CD4-positive, alpha-beta memory T cell (primary cell): ENCODE measurements at regions of chrX and their contacts with region 1.

Region 1: DNA sequence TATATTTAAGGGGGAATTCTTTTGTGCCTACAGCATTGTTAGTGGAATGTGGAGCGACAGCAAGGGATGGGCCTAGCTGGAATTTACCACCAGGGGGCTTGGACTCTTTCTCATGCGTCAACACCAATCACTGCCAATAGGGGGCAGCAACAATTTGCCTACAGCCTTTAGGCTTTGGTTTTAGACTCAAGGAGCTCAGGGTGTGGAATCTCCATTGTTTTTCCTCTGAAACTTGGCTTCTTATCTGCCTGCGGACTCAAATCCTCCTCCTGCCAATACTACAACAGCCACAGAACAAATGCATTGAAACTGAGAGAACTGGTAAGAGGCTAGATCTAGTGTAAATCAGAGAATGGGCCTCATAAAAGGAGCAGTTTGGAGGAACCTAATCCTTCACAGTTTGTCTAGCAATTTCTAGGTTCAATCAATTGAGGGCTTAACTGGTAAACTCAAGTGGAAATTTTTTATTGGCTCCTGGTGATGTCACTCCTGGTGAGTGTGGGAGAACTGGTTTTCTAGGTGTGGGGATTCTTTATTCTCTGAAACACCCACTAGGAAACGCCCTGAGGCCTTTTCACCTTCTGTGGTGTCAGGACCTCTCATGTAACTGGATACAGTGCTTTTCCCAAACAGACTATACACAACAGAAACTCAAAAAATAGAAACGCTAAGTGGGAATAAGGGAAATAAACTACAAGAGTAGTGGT is 27.9 kb upstream of the TMSB4X start:
- DNase-seq: peak; percentile 69 to 85 (median 79)
- H3K4me3 ChIP-seq: no peak overlapping the region
- H3K4me3 Mint-ChIP-seq: peak overlapping the region in 7 of 8 donors; percentile 41 to 76 (median 64)
- H3K27ac ChIP-seq: peak overlapping the region; percentile 84
- H3K27ac Mint-ChIP-seq: peak overlapping the region; percentile 91 to 99 (median 97)
- H3K4me1 ChIP-seq: peaks cover 49% of the 10 kb centered on the region
- H3K4me1 Mint-ChIP-seq: peaks cover 37 to 58% (median 50%) of the 10 kb centered on the region in 4 donors
- H3K27me3 ChIP-seq: no peaks in the 10 kb centered on the region
- H3K27me3 Mint-ChIP-seq: no peaks in the 10 kb centered on the region

Region 2: GRCh38 chrX:12974796-12975669 is 28.0 kb after region 1 on chrX and contains the start of gene TMSB4X:
- CTCF ChIA-PET with region 1: interaction called, 108 read pairs
- POLR2A ChIA-PET with region 1: interaction called, 1,441 read pairs
- intact Hi-C with region 1: loop called (anchors 1 kb)
- DNase-seq: peak; percentile 81 to 85 (median 83)
- H3K4me3 ChIP-seq: peak within 1 kb of the TSS; percentile 84 to 85
- H3K4me3 Mint-ChIP-seq: peak within 1 kb of the TSS; percentile 92 to 99 (median 98)
- H3K27ac ChIP-seq: peak within 1 kb of the TSS; percentile 84
- H3K27ac Mint-ChIP-seq: peak within 1 kb of the TSS; percentile 89 to 99 (median 97)
- H3K4me1 ChIP-seq: peaks cover 26% of the 10 kb centered on the region
- H3K4me1 Mint-ChIP-seq: peaks cover 16 to 57% (median 38%) of the 10 kb centered on the region in 4 donors
- H3K27me3 ChIP-seq: no peaks in the 10 kb centered on the region
- H3K27me3 Mint-ChIP-seq: no peaks in the 10 kb centered on the region
- total RNA-seq, gene TMSB4X: 4,851 to 5,116 TPM

Region 3: DNA sequence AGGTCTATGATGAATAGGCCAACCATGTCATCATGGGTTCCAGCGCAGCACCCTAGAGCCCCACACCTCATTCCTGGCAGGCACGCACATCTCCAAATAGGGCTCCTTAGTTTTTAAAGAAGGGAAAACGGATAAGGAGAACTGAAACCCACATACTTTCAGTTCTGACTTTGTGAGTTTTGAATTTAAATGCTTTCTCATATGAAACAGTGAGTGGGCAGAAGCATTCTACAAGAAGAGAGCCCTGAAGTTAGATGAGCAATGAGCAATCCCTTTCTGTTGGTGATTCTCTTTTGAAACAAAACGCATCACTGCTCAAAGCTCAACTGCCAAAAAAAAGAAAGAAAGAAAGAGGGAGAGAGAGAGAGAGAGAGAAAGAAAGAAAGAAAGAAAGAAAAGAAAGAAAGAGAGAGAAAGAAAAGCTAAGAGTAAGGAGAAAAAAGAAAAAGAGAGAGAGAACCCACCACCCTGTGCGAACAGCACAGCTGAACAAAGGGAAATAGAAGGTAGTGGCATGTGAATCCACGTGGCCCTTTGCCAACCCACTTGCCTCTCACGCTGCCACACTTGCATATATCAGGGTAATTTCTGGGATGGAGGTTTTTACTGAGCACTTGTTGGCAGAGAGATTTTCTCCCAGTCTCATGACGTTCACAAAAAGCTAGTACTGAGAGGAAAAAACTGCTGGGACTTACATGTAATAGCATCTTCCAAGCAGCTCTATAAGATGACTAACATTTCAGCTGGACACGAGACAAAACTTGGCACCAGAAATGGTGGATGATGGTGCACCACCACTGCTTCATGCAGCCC is 58.9 kb after region 1 on chrX:
- CTCF ChIA-PET with region 1: interaction called, 10 read pairs
- POLR2A ChIA-PET with region 1: interaction called, 23 read pairs
- intact Hi-C with region 1: loop called (anchors 2 kb)
- DNase-seq: no peak
- H3K4me3 ChIP-seq: no peak overlapping the region
- H3K4me3 Mint-ChIP-seq: peak overlapping the region; percentile 67 to 89 (median 77)
- H3K27ac ChIP-seq: peak overlapping the region; percentile 50
- H3K27ac Mint-ChIP-seq: peak overlapping the region; percentile 92 to 99 (median 96)
- H3K4me1 ChIP-seq: peaks cover 81% of the 10 kb centered on the region
- H3K4me1 Mint-ChIP-seq: peaks cover 43 to 75% (median 62%) of the 10 kb centered on the region in 4 donors
- H3K27me3 ChIP-seq: no peaks in the 10 kb centered on the region
- H3K27me3 Mint-ChIP-seq: no peaks in the 10 kb centered on the region

Region 4: GRCh38 chrX:13051529-13052172 is 104.7 kb after region 1 on chrX:
- CTCF ChIA-PET with region 1: interaction called, 12 read pairs
- POLR2A ChIA-PET with region 1: interaction called, 16 read pairs
- intact Hi-C with region 1: loop called (anchors 1 kb)
- DNase-seq: peak; percentile 61 to 71 (median 70)
- H3K4me3 ChIP-seq: no peak overlapping the region
- H3K4me3 Mint-ChIP-seq: peak overlapping the region in 7 of 8 donors; percentile 10 to 80 (median 52)
- H3K27ac ChIP-seq: peak overlapping the region; percentile 42
- H3K27ac Mint-ChIP-seq: peak overlapping the region; percentile 85 to 97 (median 95)
- H3K4me1 ChIP-seq: peaks cover 88% of the 10 kb centered on the region
- H3K4me1 Mint-ChIP-seq: peaks cover 47 to 87% (median 65%) of the 10 kb centered on the region in 4 donors
- H3K27me3 ChIP-seq: no peaks in the 10 kb centered on the region
- H3K27me3 Mint-ChIP-seq: no peaks in the 10 kb centered on the region

Region 5: DNA sequence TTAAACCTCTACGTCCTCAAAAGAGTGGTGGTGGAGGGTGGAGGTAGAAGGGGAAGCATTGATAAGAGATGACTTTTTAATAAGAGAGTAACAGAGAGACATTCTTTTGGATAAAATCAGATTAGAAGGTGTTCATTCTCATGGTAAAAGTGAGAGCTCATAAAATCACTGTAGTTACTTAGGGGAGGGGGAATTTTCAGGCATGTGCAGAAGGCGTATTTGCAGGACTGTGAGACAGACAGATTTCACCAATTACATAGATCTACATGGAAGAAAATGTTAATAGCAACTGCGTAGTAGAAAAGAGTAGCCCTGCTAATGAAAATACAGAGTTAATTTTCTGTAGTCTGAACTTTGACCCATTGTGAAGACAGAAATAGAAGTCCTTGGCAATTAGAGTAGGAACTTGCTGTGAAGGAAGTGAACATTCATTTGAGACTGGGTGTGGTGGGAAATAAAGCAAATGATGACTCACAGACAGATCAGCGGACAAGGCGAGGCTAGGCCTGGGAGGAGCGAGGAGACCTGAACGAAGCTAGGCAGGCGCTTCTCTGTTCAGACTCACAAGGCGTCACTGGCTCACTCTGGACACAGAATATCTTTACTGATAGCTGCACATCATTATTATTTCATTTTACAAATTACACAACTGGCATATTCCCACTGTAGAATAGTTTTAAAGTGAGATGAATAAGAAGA is 154.6 kb after region 1 on chrX:
- CTCF ChIA-PET with region 1: interaction called, 210 read pairs
- POLR2A ChIA-PET with region 1: interaction called, 3 read pairs
- intact Hi-C with region 1: no loop called
- DNase-seq: peak in 4 of 5 donors; percentile 43 to 72 (median 52)
- H3K4me3 ChIP-seq: no peak overlapping the region
- H3K4me3 Mint-ChIP-seq: peak overlapping the region in 7 of 8 donors; percentile 1 to 68 (median 36)
- H3K27ac ChIP-seq: peak overlapping the region; percentile 15
- H3K27ac Mint-ChIP-seq: peak overlapping the region; percentile 41 to 85 (median 83)
- H3K4me1 ChIP-seq: peaks cover 63% of the 10 kb centered on the region
- H3K4me1 Mint-ChIP-seq: peaks cover 35 to 55% (median 46%) of the 10 kb centered on the region in 4 donors
- H3K27me3 ChIP-seq: no peaks in the 10 kb centered on the region
- H3K27me3 Mint-ChIP-seq: no peaks in the 10 kb centered on the region

Region 6: GRCh38 chrX:13482746-13483145 is 535.8 kb after region 1 on chrX:
- CTCF ChIA-PET with region 1: interaction called, 161 read pairs
- POLR2A ChIA-PET with region 1: interaction called, 36 read pairs
- intact Hi-C with region 1: no loop called
- DNase-seq: no peak
- H3K4me3 ChIP-seq: no peak overlapping the region
- H3K4me3 Mint-ChIP-seq: no peak overlapping the region
- H3K27ac ChIP-seq: no peak overlapping the region
- H3K27ac Mint-ChIP-seq: no peak overlapping the region
- H3K4me1 ChIP-seq: peaks cover 7% of the 10 kb centered on the region
- H3K4me1 Mint-ChIP-seq: peaks cover 3 to 9% (median 7%) of the 10 kb centered on the region in 4 donors
- H3K27me3 ChIP-seq: no peaks in the 10 kb centered on the region
- H3K27me3 Mint-ChIP-seq: no peaks in the 10 kb centered on the region

Region 7: DNA sequence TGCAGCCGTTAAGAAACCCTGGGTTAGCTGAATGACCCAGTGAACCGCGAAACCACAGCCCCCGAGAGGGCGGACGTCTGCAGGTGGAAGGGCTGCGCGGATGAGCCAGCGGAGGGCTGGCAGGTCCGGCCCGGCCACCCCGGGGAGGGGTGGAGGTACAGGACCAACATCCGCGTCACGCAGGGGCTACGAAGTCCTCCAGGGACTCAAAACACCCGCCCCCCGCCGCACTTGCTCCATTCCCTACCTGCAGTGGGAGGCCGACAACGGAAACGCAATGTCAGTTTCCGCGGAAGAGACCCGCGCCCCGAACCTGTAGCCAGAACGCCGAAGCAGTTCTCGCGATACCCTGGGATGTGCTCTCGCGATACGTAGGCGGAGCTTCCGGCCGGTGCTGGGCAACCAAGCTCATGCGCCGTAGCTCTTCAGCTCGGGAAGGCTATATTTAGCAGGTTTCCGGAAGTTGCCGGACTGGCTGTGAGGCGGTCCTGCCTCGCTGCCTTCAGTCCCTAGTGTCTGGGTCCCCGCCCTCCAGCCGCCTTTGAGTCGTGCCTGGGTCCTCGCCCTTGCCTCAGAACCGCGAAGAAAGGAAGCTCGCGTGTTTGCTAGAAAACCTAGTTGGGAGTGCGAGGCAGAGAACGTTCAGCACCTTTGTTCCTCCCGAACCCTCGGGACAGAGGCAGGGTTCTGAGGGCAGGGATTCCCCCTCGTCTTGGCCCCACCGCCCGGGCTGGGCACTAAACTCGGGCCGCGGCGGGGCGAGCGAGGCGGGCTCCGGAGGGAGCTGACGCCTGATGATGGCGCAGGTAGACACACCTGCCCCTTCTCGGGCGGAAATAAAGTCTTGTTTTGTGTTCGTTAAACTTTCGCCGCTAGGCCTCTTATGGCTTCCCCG is 787.5 kb after region 1 on chrX and contains the starts of genes OFD1 and TRAPPC2:
- CTCF ChIA-PET with region 1: interaction called, 4 read pairs
- POLR2A ChIA-PET with region 1: no interaction called
- intact Hi-C with region 1: loop called (anchors 5 kb)
- DNase-seq: peak; percentile 91 to 93 (median 93)
- H3K4me3 ChIP-seq: peak within 1 kb of the TSS; percentile 49 to 84
- H3K4me3 Mint-ChIP-seq: peak within 1 kb of the TSS; percentile 91 to 99 (median 98)
- H3K27ac ChIP-seq: peak within 1 kb of the TSS; percentile 93
- H3K27ac Mint-ChIP-seq: peak within 1 kb of the TSS; percentile 96 to 100 (median 99)
- H3K4me1 ChIP-seq: peaks cover 59% of the 10 kb centered on the region
- H3K4me1 Mint-ChIP-seq: peaks cover 35 to 67% (median 51%) of the 10 kb centered on the region in 4 donors
- H3K27me3 ChIP-seq: no peaks in the 10 kb centered on the region
- H3K27me3 Mint-ChIP-seq: no peaks in the 10 kb centered on the region
- total RNA-seq, gene OFD1: 135 TPM
- total RNA-seq, gene TRAPPC2: 36.6 to 39.6 TPM